Posterior cingulate gyrus (tissue), 11 donors: ENCODE measurements at regions of chr19 and their contacts with region 1.

Region 1: GRCh38 chr19:23470873-23471545 is 75.7 kb upstream of the ZNF91 start:
- DNase-seq: peak in 3 of 10 donors; percentile 52 to 70 (median 53)

Region 2: GRCh38 chr19:23321948-23322549 is 149.0 kb before region 1 on chr19:
- intact Hi-C with region 1: loop called (anchors 5 kb)
- DNase-seq: no peak